Body of pancreas (tissue), 4 donors: ENCODE measurements at regions of chr7 and their contacts with region 1.

Region 1: GRCh38 chr7:141737834-141738591 is at the start of gene SSBP1:
- DNase-seq: peak; percentile 91 to 95 (median 92)
- ATAC-seq: peak; percentile 97
- H3K4me3 ChIP-seq: peak within 1 kb of the TSS; percentile 77 to 91
- H3K27ac ChIP-seq: peak within 1 kb of the TSS; percentile 45 to 90 (median 77)
- H3K4me1 ChIP-seq: peaks cover 21% of the 10 kb centered on the region
- H3K27me3 ChIP-seq: no peaks in the 10 kb centered on the region
- CTCF ChIP-seq: peak; percentile 58 to 99 (median 94)
- POLR2A ChIP-seq: peak; percentile 27 to 87 (median 86)
- total RNA-seq, gene SSBP1: 32.6 to 52.9 TPM

Region 2: DNA sequence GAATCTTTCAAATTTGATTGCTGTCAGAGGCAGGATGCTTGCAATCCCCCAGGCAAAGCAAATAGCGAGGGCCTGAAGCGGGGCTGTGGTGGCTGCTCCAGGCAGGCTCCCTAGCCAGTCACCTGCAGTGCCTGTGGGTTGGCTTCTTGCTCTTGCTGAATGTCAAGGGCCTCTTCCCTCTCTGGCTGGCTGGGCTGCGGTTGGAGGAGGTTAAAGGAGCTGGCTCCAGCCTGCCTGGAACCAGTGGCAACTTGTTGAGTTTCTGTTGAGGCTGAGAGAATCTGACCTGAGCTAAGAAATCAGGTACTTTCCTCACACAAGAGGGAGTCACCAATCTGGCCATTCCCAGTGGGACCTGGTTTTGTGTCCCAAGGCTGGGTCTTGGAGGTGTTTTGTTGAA is 529.5 kb before region 1 on chr7:
- intact Hi-C with region 1: no loop called
- DNase-seq: no peak
- ATAC-seq: no peak
- H3K4me3 ChIP-seq: no peak overlapping the region
- H3K27ac ChIP-seq: no peak overlapping the region
- H3K4me1 ChIP-seq: no peaks in the 10 kb centered on the region
- H3K27me3 ChIP-seq: no peaks in the 10 kb centered on the region
- CTCF ChIP-seq: no peak
- POLR2A ChIP-seq: no peak

Region 3: DNA sequence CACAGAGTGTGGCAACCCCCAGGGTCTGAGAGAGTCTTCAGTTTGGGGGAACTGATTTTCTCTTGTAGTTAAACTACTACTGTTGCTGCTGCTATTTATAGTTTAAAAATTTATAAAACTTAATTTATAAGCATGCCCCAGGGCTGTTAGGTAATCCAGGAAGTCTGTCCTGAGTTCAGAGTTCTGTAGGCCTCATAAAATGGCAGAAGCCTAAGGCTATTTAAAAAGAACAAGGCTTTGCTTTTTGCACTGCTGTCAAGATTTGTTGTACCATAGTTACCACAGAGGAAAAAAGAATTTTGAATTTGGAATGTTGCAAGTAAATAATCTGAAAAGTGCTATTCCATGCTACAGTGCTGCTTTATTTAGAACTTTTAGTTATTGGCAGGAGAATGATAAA is 120.7 kb before region 1 on chr7:
- intact Hi-C with region 1: no loop called
- DNase-seq: no peak
- ATAC-seq: no peak
- H3K4me3 ChIP-seq: no peak overlapping the region
- H3K27ac ChIP-seq: no peak overlapping the region
- H3K4me1 ChIP-seq: no peaks in the 10 kb centered on the region
- H3K27me3 ChIP-seq: no peaks in the 10 kb centered on the region
- CTCF ChIP-seq: no peak
- POLR2A ChIP-seq: no peak

Region 4: DNA sequence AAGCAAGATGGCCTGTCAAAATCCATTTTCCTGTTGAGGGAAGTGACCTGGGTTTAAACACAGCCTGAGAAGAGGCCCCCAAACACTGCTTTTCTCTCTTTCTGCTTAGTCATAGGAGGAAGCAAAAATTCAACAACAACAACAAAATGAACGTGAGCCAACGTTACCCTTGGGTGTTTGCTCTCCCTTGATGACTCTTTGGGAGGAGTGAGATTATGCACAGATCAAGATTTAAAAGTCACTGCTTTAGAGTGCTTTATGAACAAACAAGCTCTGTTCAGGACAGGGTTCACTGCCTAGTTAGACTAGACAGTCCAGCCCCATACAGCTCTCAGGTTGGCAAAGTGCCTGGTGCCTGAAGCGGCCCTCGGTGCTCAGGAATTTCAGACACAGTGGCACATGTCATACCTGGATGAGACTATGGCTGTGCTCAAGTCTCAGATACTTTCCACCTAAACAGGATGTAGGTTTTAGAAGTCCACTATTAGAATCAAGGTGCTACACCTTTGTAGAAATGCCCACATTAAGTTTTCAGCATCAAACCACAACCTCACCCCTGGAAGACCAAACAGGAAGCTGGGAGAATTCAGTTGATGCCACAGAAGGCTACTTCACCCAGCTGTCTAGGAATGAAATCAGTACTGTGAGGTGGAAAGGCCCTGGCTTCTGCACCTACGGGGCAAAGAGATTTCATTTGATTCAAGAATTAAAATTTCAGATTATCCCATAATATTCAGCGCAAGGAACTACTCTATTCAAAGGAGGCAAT is 74.7 kb before region 1 on chr7:
- intact Hi-C with region 1: loop called (anchors 10 kb)
- DNase-seq: peak; percentile 34 to 53 (median 41)
- ATAC-seq: peak; percentile 63
- H3K4me3 ChIP-seq: no peak overlapping the region
- H3K27ac ChIP-seq: peak overlapping the region; percentile 1 to 66 (median 48)
- H3K4me1 ChIP-seq: peaks cover 19% of the 10 kb centered on the region
- H3K27me3 ChIP-seq: no peaks in the 10 kb centered on the region
- CTCF ChIP-seq: no peak
- POLR2A ChIP-seq: no peak

Region 5: GRCh38 chr7:141844256-141844655 is 106.2 kb after region 1 on chr7:
- intact Hi-C with region 1: no loop called
- DNase-seq: peak; percentile 79 to 91 (median 86)
- ATAC-seq: peak; percentile 85
- H3K4me3 ChIP-seq: no peak overlapping the region
- H3K27ac ChIP-seq: peak overlapping the region; percentile 56 to 77 (median 64)
- H3K4me1 ChIP-seq: peaks cover 61% of the 10 kb centered on the region
- H3K27me3 ChIP-seq: no peaks in the 10 kb centered on the region
- CTCF ChIP-seq: no peak
- POLR2A ChIP-seq: no peak